IMR-90 (cell line): ENCODE measurements at regions of chr15 and their contacts with region 1.

Region 1: DNA sequence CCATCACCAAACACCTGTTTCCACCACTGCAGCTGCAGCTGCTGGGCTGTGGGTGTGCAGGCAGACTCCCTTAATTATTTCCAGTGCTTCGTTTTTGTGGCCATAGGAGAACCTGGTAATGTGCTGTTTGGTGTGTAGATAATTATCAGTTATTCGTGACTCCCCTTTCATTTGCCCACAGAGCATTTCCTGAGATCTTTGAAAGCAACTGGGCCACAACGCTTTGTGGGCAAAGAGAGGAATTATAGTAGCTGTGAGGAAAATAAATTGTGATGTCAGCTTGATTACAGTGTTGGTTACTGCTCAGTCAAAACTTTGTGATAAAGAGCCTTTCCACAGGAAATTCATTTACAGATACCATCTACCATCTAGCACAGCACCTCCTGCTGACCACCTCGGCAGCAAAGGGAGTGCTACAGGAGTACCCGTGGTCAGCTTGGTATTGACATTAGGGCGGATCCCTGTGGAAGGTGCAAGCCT is 193.3 kb upstream of the SLCO3A1 start:
- DNase-seq: no peak
- ATAC-seq: no peak
- H3K4me3 ChIP-seq: no peak overlapping the region
- H3K27ac ChIP-seq: no peak overlapping the region
- H3K4me1 ChIP-seq: no peaks in the 10 kb centered on the region
- H3K27me3 ChIP-seq: no peaks in the 10 kb centered on the region
- CTCF ChIP-seq: no peak
- POLR2A ChIP-seq: no peak
- RAD21 ChIP-seq: no peak

Region 2: GRCh38 chr15:91291673-91292072 is 368.5 kb before region 1 on chr15:
- CTCF ChIA-PET with region 1: no interaction called
- POLR2A ChIA-PET with region 1: interaction called, 15 read pairs
- dilution Hi-C with region 1: no loop called
- in situ Hi-C with region 1: no loop called
- intact Hi-C with region 1: no loop called
- DNase-seq: peak; percentile 20
- ATAC-seq: no peak
- H3K4me3 ChIP-seq: no peak overlapping the region
- H3K27ac ChIP-seq: no peak overlapping the region
- H3K4me1 ChIP-seq: no peaks in the 10 kb centered on the region
- H3K27me3 ChIP-seq: no peaks in the 10 kb centered on the region; the same call in 1 of the 2 replicates
- CTCF ChIP-seq: no peak
- POLR2A ChIP-seq: no peak
- RAD21 ChIP-seq: no peak

Region 3: DNA sequence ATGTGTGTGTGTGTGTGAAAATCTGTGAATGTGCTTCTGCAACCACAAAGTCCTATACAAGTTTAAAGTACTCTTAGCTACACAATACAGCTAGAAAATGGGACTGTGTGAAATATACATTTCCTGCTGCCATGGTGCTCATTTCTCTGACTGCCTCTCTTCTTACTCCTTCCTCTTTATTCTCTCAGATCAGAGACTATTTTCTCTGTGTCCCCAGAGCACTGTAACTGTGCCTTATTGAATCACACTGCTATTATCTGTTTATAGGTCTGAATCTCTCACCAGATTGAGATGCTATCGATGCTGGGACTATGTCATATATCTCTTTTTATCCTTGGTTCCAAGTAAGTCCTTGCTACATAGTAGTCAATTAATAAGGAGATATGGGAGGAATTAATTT is 24.6 kb before region 1 on chr15:
- CTCF ChIA-PET with region 1: no interaction called
- POLR2A ChIA-PET with region 1: no interaction called
- dilution Hi-C with region 1: no loop called
- in situ Hi-C with region 1: no loop called
- intact Hi-C with region 1: no loop called
- DNase-seq: no peak
- ATAC-seq: no peak
- H3K4me3 ChIP-seq: no peak overlapping the region
- H3K27ac ChIP-seq: no peak overlapping the region
- H3K4me1 ChIP-seq: no peaks in the 10 kb centered on the region
- H3K27me3 ChIP-seq: no peaks in the 10 kb centered on the region
- CTCF ChIP-seq: no peak
- POLR2A ChIP-seq: no peak
- RAD21 ChIP-seq: no peak

Region 4: GRCh38 chr15:91679429-91679828 is 19.2 kb after region 1 on chr15:
- CTCF ChIA-PET with region 1: no interaction called
- POLR2A ChIA-PET with region 1: no interaction called
- dilution Hi-C with region 1: no loop called
- in situ Hi-C with region 1: no loop called
- intact Hi-C with region 1: no loop called
- DNase-seq: no peak
- ATAC-seq: no peak
- H3K4me3 ChIP-seq: no peak overlapping the region
- H3K27ac ChIP-seq: no peak overlapping the region
- H3K4me1 ChIP-seq: no peaks in the 10 kb centered on the region
- H3K27me3 ChIP-seq: no peaks in the 10 kb centered on the region
- CTCF ChIP-seq: no peak
- POLR2A ChIP-seq: no peak
- RAD21 ChIP-seq: no peak

Region 5: DNA sequence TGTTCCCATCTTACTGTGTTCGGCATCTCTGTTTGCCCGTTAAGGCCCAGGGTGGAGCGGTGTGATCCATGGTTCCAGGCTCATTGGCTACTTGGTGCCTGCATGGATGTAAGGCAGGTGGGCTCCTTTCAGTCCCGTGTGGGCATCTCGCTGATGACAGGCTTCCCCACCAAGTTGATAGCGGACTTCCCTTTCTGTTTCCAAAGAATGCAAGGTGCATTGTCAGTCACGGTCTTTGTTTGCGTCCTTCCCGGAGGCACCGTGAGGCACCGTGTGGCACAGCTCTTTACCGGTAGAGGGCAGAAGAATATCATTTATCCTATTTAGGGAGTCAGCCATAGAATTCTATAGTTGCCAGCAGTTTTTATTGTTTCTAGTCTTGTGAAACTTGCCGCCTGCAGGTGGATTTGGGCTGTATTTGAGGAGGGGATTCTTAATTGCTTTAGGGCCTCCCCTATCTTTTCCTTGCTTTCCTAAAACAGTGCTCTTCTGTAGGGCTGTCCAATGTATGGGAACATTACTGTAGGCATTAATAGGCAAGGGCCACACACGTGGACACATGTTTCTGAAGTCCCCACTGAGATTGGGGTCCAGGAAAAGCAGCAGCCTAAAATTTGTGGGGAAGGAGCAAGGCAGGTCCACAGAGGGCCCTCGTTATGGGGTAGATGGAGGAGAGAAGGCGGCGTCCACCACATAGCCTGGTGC is 437.4 kb after region 1 on chr15:
- CTCF ChIA-PET with region 1: no interaction called
- POLR2A ChIA-PET with region 1: no interaction called
- dilution Hi-C with region 1: no loop called
- in situ Hi-C with region 1: no loop called
- intact Hi-C with region 1: no loop called
- DNase-seq: peak; percentile 46
- ATAC-seq: peak; percentile 98
- H3K4me3 ChIP-seq: no peak overlapping the region
- H3K27ac ChIP-seq: no peak overlapping the region
- H3K4me1 ChIP-seq: no peaks in the 10 kb centered on the region
- H3K27me3 ChIP-seq: no peaks in the 10 kb centered on the region
- CTCF ChIP-seq: peak; percentile 86
- POLR2A ChIP-seq: no peak
- RAD21 ChIP-seq: peak; percentile 82